ENCODE measurements at regions of chr1 and their contacts with region 1.

Region 1: DNA sequence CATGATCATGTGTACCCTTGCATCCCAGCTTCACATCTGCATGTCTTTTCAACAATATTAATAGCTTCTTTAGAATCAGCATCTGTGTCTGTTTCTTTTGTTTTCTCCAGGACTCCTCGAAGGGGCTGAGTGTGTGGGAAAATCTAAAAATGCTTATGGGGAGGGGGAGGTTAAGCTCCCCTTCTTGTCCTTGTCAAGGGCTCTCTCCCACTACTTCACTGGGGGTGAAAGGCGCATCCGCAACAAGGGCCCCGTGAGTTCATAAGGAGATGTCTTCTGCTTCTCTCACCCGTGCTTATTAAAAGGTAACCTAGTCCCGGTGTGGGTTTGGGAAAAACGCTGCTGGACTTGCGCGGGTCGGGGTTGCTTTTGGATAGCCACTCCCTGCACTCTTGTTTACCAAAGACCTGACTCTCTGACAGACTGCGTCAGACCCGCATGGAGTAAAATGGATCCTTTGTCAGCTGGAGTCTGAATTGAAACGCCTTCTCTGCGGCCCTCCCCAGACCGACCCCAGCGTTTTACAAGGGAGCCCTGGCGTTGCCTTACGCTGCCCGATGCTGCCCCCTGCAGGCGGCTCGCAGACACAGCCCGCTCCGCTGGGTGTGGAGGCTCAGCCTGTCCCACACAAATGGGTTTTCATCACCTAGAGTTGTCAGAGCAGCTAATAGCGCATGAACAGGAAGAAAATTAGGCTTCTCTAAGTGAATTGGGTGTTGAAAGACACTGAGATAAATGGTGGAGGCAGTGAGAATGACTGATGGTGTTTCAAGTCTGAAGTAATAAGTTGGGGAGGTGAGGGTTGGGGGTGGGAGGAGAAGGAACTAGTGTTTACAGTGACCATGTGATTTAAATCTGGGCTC is 53.8 kb downstream of the IER5 start:
- DNase-seq: peak; percentile 86
- ATAC-seq: peak; percentile 95
- H3K4me3 Mint-ChIP-seq: peak overlapping the region; percentile 72
- H3K27ac Mint-ChIP-seq: peak overlapping the region; percentile 76
- H3K4me1 Mint-ChIP-seq: peaks cover 48% of the 10 kb centered on the region
- H3K27me3 Mint-ChIP-seq: no peaks in the 10 kb centered on the region
- CTCF ChIP-seq: peak; percentile 79

Region 2: DNA sequence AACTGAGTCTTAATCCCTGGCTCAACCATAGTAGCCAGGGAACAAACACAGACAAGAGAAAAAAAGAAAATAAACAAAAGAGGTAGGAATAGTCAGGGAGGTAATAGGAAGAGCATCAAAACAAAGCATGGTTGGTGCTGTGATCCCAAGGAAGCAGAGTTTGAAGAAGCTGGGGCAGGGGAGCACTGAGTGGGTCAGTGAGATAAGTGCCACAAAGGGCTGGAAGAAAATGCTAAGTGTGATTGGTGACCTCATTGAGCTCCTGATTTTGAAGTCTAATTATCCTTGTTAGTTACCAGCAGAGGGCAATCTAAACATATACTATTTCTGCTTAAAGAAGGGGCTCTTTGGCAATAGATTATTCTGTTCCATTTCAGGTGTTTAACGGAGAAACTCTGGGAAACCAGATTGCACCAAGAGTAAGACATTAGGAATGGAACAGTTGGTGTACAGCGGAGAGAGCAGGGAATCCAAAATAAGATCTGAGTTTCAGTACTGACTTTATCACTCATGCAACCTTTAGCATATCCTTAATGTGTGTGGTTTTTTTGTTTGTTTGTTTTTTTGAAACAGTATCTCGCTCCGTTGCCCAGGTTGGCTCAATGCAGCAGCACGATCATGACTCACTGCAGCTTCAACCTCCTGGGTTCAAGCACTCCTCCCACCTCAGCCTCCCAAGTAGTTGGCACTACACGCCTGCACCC is 260.4 kb before region 1 on chr1:
- CTCF ChIA-PET with region 1: interaction called, 31 read pairs
- POLR2A ChIA-PET with region 1: no interaction called
- intact Hi-C with region 1: loop called (anchors 1 kb)
- DNase-seq: no peak
- ATAC-seq: no peak
- H3K4me3 Mint-ChIP-seq: no peak overlapping the region
- H3K27ac Mint-ChIP-seq: no peak overlapping the region
- H3K4me1 Mint-ChIP-seq: no peaks in the 10 kb centered on the region
- H3K27me3 Mint-ChIP-seq: no peaks in the 10 kb centered on the region
- CTCF ChIP-seq: no peak

Region 3: DNA sequence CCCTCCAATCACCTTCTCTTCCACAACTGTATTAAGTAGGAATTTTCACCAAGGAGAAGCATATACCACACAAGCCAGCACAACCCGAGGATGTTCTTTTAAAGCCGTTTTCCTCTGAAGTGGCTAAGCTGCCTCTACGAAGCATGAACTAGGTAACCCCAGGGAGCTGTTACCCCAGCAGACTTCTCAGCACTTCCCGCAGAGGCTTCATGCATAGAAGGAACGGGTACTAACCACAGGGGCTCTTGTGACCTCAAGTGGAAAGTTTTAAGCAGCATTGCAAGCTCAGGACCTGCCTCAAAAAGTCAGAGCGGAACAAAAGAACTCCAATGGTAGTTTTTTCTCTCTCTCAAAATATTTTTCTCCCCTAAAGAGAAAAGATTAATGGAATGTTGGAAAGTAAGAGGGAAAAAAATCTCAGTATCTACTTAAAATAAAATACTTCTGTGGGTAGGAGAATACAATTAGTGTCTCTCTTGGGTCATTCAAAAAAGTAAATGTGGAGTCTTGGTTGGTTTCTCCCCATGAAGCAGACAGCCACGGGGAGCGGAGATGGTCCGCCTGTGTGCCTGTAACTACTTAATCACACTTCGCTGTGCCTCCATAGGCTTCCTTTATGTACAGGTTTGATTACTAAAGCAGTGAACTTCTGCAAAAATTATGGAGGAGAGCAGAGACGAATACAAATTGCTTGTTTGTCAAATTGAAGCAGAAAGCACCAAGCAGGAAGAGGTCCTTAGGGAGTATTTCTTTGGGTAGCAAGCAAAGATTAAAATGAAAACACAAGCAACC is 160.5 kb before region 1 on chr1:
- CTCF ChIA-PET with region 1: interaction called, 3 read pairs
- POLR2A ChIA-PET with region 1: no interaction called
- intact Hi-C with region 1: loop called (anchors 2 kb)
- DNase-seq: no peak
- ATAC-seq: peak; percentile 93
- H3K4me3 Mint-ChIP-seq: no peak overlapping the region
- H3K27ac Mint-ChIP-seq: peak overlapping the region; percentile 64
- H3K4me1 Mint-ChIP-seq: peaks cover 15% of the 10 kb centered on the region
- H3K27me3 Mint-ChIP-seq: no peaks in the 10 kb centered on the region
- CTCF ChIP-seq: no peak

Region 4: GRCh38 chr1:181062836-181063428 is 79.4 kb before region 1 on chr1:
- CTCF ChIA-PET with region 1: interaction called, 20 read pairs
- POLR2A ChIA-PET with region 1: interaction called, 17 read pairs
- intact Hi-C with region 1: loop called (anchors 1 kb)
- DNase-seq: no peak
- ATAC-seq: peak; percentile 69
- H3K4me3 Mint-ChIP-seq: peak overlapping the region; percentile 79
- H3K27ac Mint-ChIP-seq: peak overlapping the region; percentile 92
- H3K4me1 Mint-ChIP-seq: peaks cover 34% of the 10 kb centered on the region
- H3K27me3 Mint-ChIP-seq: no peaks in the 10 kb centered on the region
- CTCF ChIP-seq: no peak

Region 5: GRCh38 chr1:181105134-181106021 is 36.9 kb before region 1 on chr1:
- CTCF ChIA-PET with region 1: interaction called, 40 read pairs
- POLR2A ChIA-PET with region 1: interaction called, 1,783 read pairs
- intact Hi-C with region 1: loop called (anchors 2 kb)
- DNase-seq: peak; percentile 88
- ATAC-seq: peak; percentile 87
- H3K4me3 Mint-ChIP-seq: peak overlapping the region; percentile 85
- H3K27ac Mint-ChIP-seq: peak overlapping the region; percentile 89
- H3K4me1 Mint-ChIP-seq: peaks cover 40% of the 10 kb centered on the region
- H3K27me3 Mint-ChIP-seq: no peaks in the 10 kb centered on the region
- CTCF ChIP-seq: no peak

Region 6: DNA sequence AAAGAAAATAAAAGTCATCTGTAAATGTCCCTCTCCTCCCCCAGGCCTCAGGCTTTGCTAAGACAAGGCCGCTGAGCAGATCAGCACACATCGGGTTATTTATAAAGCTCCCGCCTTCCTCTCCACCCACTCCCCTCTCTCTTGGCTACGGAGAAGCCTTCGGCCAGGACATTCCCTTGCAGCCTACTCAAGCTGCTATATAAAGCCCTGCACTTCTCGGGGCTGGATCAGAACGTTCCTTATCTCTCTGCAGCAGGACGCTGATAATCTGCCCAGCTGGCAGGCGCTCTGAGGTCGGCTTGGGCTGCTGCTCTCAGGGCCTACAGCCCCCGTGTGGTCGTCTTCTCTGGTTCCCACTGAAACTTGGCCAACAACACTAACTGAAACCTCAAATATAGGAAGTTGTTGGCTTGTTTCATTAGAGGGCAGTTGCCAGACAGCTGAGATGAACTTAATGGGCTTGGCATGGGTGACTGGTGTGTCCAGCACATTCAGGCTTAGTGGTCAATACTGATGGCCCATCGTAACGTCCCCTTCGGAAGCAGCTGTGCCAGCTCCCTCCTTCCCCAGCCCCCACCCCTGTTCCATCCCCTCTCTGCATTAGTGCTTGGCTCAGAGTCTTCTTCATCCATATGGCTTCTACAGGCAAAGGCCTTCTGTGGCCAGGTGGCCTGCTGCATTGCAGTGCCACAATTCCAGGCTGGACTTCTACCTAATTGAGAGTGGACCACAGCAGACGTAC is 10.7 kb after region 1 on chr1:
- CTCF ChIA-PET with region 1: interaction called, 29 read pairs
- POLR2A ChIA-PET with region 1: interaction called, 5 read pairs
- intact Hi-C with region 1: loop called (anchors 1 kb)
- DNase-seq: peak; percentile 48
- ATAC-seq: peak; percentile 86
- H3K4me3 Mint-ChIP-seq: peak overlapping the region; percentile 71
- H3K27ac Mint-ChIP-seq: peak overlapping the region; percentile 64
- H3K4me1 Mint-ChIP-seq: peaks cover 48% of the 10 kb centered on the region
- H3K27me3 Mint-ChIP-seq: no peaks in the 10 kb centered on the region
- CTCF ChIP-seq: no peak